Endothelial cell of umbilical vein (primary cell): ENCODE measurements at regions of chr6 and their contacts with region 1.

Region 1: GRCh38 chr6:73695619-73696421 is at the start of gene CD109:
- DNase-seq: peak; percentile 94
- H3K4me3 ChIP-seq: peak within 1 kb of the TSS; percentile 40 to 88 (median 63)
- H3K27ac ChIP-seq: peak within 1 kb of the TSS; percentile 93
- H3K4me1 ChIP-seq: peaks cover 43% of the 10 kb centered on the region
- H3K27me3 ChIP-seq: no peaks in the 10 kb centered on the region
- CTCF ChIP-seq: no peak
- POLR2A ChIP-seq: peak; percentile 70
- total RNA-seq, gene CD109: 86.2 and 107 TPM in 2 replicates

Region 2: DNA sequence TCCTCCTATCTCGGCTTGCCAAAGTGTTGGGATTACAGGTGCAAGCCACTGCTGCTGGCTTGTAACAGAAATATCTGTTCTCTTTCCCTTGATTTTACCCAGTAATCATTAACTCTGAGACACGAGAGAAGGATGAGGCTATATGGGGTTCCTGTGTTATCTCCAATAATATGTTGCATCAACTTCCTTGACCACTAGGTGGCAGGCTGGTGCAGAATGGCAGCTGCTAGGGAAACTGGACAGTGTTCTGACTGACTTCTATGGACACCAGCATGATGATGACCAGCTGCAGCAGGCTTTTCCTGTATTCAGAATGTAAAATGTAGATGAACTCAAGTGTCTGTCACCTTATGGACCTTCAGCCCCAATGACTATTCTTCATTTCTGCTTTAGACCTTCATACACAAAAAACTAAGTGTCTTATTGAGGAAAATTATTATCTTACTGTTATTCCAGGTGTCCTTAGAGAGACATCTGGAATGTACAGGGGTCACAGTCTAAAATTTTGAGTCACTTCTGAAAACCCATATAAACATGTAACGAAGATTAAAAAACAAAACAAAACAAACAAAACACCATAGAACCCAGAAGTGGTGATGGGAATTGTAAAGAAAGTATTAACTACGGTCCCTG is 20.2 kb before region 1 on chr6:
- CTCF ChIA-PET with region 1: interaction called, 5 read pairs
- POLR2A ChIA-PET with region 1: no interaction called
- dilution Hi-C with region 1: no loop called
- intact Hi-C with region 1: loop called (anchors 1 kb)
- DNase-seq: peak; percentile 85
- H3K4me3 ChIP-seq: no peak overlapping the region
- H3K27ac ChIP-seq: no peak overlapping the region
- H3K4me1 ChIP-seq: peaks cover 3% of the 10 kb centered on the region
- H3K27me3 ChIP-seq: no peaks in the 10 kb centered on the region
- CTCF ChIP-seq: peak; percentile 82 to 84
- POLR2A ChIP-seq: no peak

Region 3: DNA sequence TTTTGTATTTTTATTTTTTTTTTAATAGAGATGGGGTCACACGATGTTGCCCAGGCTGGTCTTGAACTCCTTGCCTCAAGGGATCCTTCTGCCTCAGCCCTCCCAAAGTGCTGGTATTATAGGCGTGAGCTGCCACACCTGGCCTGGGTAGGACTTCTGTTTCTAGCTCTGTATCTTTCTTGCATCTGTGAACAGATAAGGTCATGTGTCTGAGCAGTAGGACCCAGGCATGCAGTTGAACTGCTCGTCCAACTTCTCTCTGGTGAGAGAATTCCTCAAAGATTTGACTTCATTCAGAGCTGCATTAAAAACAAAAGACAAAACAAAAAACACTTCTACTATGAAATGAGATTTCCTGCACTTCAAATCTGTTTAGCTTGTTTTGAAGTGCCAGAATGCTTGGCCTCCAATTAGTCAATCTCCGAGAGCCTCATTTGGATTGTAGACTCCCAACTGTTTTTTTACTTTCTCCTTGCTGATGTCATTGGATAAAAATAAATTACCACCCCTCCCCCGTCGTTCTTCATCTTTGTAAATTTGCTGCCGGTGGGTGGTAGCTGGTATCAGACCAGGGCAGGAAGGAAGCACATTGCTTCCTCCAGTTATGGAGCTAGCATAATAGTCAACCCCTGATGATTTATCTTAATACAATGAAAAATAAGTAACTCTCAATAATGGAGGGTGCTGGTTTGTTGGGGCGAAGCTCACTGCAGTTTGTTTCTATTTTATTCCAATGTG is 17.8 kb after region 1 on chr6:
- CTCF ChIA-PET with region 1: interaction called, 8 read pairs
- POLR2A ChIA-PET with region 1: interaction called, 3 read pairs
- dilution Hi-C with region 1: no loop called
- intact Hi-C with region 1: loop called (anchors 1 kb)
- DNase-seq: peak; percentile 98
- H3K4me3 ChIP-seq: peak overlapping the region in 1 of 3 experiments; percentile 30
- H3K27ac ChIP-seq: peak overlapping the region; percentile 95
- H3K4me1 ChIP-seq: peaks cover 35% of the 10 kb centered on the region
- H3K27me3 ChIP-seq: no peaks in the 10 kb centered on the region
- CTCF ChIP-seq: no peak
- POLR2A ChIP-seq: peak; percentile 60

Region 4: DNA sequence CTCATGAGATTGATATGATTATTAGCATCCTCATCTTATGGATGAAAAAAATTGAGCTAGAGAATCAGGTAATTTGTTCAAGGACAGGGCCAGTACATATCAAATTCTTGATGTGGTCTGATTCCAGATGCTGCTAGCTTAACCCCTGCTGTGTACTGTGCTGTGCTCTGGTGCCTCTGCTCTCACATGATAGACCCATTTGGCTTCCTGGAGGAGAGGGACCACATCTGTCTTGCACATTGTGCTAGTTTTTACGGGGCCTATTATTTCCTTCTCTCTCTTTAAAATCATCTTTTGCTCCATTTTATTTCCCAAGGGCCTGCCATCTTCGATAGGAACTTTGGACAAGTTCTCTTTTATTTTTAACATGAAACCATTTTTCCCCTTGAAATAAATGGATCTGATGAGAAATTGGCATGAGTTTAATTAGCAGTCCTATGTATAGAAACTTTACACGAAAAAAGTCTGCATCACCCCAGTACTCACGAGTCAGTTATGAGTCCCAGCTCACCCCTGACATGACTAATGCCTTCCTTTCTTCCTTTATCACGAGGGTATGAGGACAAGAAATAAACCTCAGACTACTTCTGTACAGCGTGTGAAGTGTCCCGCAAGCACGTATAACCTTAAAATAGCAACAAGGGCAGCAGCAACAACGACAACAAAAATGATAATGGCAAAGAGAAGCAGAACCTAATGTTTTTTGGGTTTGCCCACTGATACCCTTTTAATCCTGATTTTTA is 26.7 kb after region 1 on chr6:
- CTCF ChIA-PET with region 1: interaction called, 4 read pairs
- POLR2A ChIA-PET with region 1: interaction called, 5 read pairs
- dilution Hi-C with region 1: no loop called
- intact Hi-C with region 1: loop called (anchors 1 kb)
- DNase-seq: peak; percentile 91
- H3K4me3 ChIP-seq: no peak overlapping the region
- H3K27ac ChIP-seq: peak overlapping the region; percentile 96
- H3K4me1 ChIP-seq: peaks cover 18% of the 10 kb centered on the region
- H3K27me3 ChIP-seq: no peaks in the 10 kb centered on the region
- CTCF ChIP-seq: no peak
- POLR2A ChIP-seq: no peak

Region 5: GRCh38 chr6:73817253-73817652 is 121.4 kb after region 1 on chr6:
- CTCF ChIA-PET with region 1: no interaction called
- POLR2A ChIA-PET with region 1: no interaction called
- dilution Hi-C with region 1: no loop called
- intact Hi-C with region 1: no loop called
- DNase-seq: no peak
- H3K4me3 ChIP-seq: no peak overlapping the region
- H3K27ac ChIP-seq: no peak overlapping the region
- H3K4me1 ChIP-seq: no peaks in the 10 kb centered on the region
- H3K27me3 ChIP-seq: no peaks in the 10 kb centered on the region
- CTCF ChIP-seq: no peak
- POLR2A ChIP-seq: no peak